ENCODE measurements at regions of chr13 and their contacts with region 1.

Region 1: DNA sequence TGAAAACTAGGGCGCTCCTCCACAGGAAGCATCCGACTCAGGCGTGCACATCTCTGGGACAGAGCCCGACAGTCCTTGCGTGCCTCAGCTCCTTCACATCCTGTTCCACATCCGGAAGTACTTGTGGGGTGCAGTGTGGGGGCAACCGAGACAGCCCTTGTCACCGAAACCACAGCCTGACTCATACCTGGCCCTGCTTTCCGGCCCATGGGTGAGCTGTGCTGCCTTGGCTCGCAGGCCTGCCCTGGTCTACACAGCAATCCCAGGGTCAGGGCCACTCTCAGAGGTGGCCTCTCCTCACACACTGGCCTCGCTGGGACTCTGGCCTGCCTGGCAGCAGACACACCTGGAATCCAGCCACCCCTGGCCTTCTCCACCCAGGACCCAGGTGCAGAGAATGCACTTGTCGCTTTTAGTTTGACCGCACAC is 100.4 kb downstream of the STK24 start:
- DNase-seq: peak; percentile 95
- H3K4me3 Mint-ChIP-seq: peak overlapping the region; percentile 71
- H3K27ac Mint-ChIP-seq: peak overlapping the region; percentile 92
- H3K4me1 Mint-ChIP-seq: peaks cover 64% of the 10 kb centered on the region
- H3K27me3 Mint-ChIP-seq: no peaks in the 10 kb centered on the region

Region 2: GRCh38 chr13:98004111-98004510 is 472.4 kb before region 1 on chr13:
- CTCF ChIA-PET with region 1: no interaction called
- intact Hi-C with region 1: no loop called
- DNase-seq: no peak
- H3K4me3 Mint-ChIP-seq: no peak overlapping the region
- H3K27ac Mint-ChIP-seq: no peak overlapping the region
- H3K4me1 Mint-ChIP-seq: no peaks in the 10 kb centered on the region
- H3K27me3 Mint-ChIP-seq: no peaks in the 10 kb centered on the region

Region 3: GRCh38 chr13:98265692-98266551 is 210.6 kb before region 1 on chr13:
- CTCF ChIA-PET with region 1: no interaction called
- intact Hi-C with region 1: no loop called
- DNase-seq: no peak
- H3K4me3 Mint-ChIP-seq: no peak overlapping the region
- H3K27ac Mint-ChIP-seq: no peak overlapping the region
- H3K4me1 Mint-ChIP-seq: no peaks in the 10 kb centered on the region
- H3K27me3 Mint-ChIP-seq: no peaks in the 10 kb centered on the region

Region 4: DNA sequence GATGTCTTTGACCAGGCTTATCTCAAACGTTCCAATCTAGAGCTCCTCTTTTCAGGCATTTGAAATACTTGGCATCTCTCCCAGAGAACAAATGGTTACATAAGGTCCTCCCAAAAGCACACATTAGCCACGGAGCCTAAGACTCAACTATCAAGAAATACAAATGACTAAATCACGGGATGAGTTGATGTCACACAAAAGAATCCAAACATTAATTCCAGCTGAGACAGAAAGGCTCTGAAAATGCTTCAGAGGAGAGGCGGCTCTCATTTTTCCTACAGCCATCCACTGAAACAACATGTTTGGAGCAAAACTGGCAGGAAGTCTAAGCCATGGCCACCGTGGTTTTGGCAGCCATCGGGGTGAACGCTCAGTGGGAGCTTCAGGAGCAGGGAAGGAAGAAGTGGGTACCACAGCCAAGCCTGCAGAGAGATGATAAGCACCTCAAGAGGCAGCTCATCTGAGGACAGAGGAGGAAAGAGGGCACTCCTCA is 22.1 kb before region 1 on chr13:
- CTCF ChIA-PET with region 1: no interaction called
- intact Hi-C with region 1: loop called (anchors 2 kb)
- DNase-seq: no peak
- H3K4me3 Mint-ChIP-seq: no peak overlapping the region
- H3K27ac Mint-ChIP-seq: no peak overlapping the region
- H3K4me1 Mint-ChIP-seq: peaks cover 19% of the 10 kb centered on the region
- H3K27me3 Mint-ChIP-seq: no peaks in the 10 kb centered on the region

Region 5: DNA sequence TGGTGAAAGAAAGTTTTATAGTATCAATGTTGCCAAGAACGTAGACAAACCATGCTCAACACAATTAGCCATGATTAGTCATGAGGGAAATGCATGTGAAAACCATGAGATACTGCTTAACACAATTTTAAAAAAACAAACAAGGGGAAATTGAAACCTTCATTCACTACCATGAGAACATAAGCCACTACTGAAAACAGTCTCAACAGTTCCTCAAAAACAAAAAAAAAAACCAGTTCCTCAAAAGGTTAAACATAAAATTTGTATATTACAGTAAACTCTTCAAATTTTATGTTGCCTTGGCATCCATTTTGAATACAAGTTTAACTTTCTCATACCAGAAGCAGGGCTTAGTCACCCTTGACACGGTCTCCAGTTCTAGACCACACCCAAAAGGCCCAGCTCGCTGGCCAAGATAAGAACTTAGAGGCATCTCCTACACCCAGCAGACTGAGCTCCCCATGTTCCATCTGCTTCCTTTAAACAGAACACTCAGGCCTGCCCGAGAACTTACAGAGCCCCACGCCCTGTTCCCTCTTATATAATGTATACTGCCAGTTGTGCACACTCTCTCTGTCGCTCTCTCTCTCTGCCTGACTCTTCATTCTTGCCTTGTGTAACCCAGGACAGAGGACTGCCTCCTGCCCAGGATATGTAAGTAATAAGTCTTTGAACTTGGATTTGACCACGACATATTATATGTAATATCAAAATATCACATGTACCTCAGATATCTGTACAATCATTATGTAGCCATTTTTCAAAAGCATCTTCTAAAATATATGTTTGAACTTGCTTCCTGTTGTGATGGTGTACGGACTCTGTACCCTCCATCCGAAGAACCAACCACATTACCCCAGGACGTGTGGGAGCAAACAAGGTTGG is 33.0 kb after region 1 on chr13:
- CTCF ChIA-PET with region 1: interaction called, 3 read pairs
- intact Hi-C with region 1: loop called (anchors 1 kb)
- DNase-seq: peak; percentile 69
- H3K4me3 Mint-ChIP-seq: peak overlapping the region; percentile 29
- H3K27ac Mint-ChIP-seq: peak overlapping the region; percentile 77
- H3K4me1 Mint-ChIP-seq: peaks cover 94% of the 10 kb centered on the region
- H3K27me3 Mint-ChIP-seq: no peaks in the 10 kb centered on the region

Region 6: DNA sequence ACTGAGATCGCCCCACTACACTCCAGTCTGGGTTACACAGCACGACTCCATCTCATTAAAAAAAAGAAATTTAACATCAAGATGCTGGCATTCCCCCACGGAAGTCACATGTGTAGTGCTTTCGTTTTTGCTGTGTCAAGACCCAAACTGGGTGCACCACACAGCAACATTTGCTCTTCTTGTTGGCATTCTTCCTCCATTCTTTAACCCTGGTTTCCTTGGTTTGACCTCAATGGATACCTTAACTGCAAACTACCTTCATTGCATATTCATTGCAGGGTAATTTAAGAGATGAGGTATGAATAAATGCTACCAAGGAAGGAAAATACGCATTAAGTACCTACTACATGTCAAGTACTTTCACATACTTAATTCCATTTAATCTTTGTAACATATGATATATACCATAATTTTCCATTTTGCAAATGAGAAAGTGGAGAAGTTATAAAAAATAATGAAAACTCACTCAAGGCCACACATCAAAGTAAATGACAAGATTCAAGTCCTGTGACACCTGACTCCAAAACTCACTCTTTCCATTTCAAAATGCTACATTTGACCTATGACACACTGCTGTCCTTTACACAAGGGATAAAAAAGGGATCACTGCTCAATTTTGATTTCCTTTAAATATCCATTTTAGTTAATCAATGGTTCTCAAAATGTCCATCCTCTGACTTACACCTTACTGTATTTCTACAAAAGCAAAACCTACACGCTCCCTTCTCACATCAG is 41.2 kb after region 1 on chr13:
- CTCF ChIA-PET with region 1: no interaction called
- intact Hi-C with region 1: loop called (anchors 1 kb)
- DNase-seq: peak; percentile 75
- H3K4me3 Mint-ChIP-seq: no peak overlapping the region
- H3K27ac Mint-ChIP-seq: peak overlapping the region; percentile 81
- H3K4me1 Mint-ChIP-seq: peaks cover 97% of the 10 kb centered on the region
- H3K27me3 Mint-ChIP-seq: no peaks in the 10 kb centered on the region

Region 7: GRCh38 chr13:98528663-98529570 is 52.4 kb after region 1 on chr13:
- CTCF ChIA-PET with region 1: no interaction called
- intact Hi-C with region 1: loop called (anchors 1 kb)
- DNase-seq: peak; percentile 43
- H3K4me3 Mint-ChIP-seq: no peak overlapping the region
- H3K27ac Mint-ChIP-seq: peak overlapping the region; percentile 75
- H3K4me1 Mint-ChIP-seq: peaks cover 91% of the 10 kb centered on the region
- H3K27me3 Mint-ChIP-seq: no peaks in the 10 kb centered on the region

Region 8: GRCh38 chr13:98542568-98543377 is 66.2 kb after region 1 on chr13:
- CTCF ChIA-PET with region 1: interaction called, 4 read pairs
- intact Hi-C with region 1: loop called (anchors 2 kb)
- DNase-seq: peak; percentile 63
- H3K4me3 Mint-ChIP-seq: peak overlapping the region; percentile 67
- H3K27ac Mint-ChIP-seq: peak overlapping the region; percentile 82
- H3K4me1 Mint-ChIP-seq: peaks cover 94% of the 10 kb centered on the region
- H3K27me3 Mint-ChIP-seq: no peaks in the 10 kb centered on the region

Region 9: DNA sequence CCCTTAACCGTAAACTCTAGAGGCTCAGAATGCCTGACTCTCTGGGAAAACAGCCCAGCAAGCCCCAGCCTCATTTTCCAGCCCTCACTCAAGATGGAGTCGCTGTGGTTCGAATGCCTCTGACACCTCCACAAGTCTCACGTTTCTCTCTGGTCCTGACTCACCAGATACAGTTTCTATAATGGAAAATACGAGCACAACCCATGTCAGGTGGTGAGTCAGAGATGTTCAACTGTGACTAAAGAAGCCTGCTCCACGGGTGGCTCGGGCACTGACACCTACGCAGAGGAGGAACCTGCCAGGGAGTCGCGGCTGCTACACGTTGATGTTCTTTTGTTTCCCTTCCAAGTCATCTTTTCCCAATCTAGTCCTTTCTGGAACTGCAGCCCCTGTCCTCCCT is 187.5 kb after region 1 on chr13:
- CTCF ChIA-PET with region 1: interaction called, 3 read pairs
- intact Hi-C with region 1: loop called (anchors 1 kb)
- DNase-seq: peak; percentile 85
- H3K4me3 Mint-ChIP-seq: no peak overlapping the region
- H3K27ac Mint-ChIP-seq: peak overlapping the region; percentile 44
- H3K4me1 Mint-ChIP-seq: peaks cover 19% of the 10 kb centered on the region
- H3K27me3 Mint-ChIP-seq: no peaks in the 10 kb centered on the region